Activated naive CD4-positive, alpha-beta T cell treated with anti-CD3 and anti-CD28 coated beads, Interleukin-2, amount 10 ng/mL, durations not matched to agents 7 days and 5 days (primary cell): ENCODE measurements at regions of chr2 and their contacts with region 1.

Region 1: DNA sequence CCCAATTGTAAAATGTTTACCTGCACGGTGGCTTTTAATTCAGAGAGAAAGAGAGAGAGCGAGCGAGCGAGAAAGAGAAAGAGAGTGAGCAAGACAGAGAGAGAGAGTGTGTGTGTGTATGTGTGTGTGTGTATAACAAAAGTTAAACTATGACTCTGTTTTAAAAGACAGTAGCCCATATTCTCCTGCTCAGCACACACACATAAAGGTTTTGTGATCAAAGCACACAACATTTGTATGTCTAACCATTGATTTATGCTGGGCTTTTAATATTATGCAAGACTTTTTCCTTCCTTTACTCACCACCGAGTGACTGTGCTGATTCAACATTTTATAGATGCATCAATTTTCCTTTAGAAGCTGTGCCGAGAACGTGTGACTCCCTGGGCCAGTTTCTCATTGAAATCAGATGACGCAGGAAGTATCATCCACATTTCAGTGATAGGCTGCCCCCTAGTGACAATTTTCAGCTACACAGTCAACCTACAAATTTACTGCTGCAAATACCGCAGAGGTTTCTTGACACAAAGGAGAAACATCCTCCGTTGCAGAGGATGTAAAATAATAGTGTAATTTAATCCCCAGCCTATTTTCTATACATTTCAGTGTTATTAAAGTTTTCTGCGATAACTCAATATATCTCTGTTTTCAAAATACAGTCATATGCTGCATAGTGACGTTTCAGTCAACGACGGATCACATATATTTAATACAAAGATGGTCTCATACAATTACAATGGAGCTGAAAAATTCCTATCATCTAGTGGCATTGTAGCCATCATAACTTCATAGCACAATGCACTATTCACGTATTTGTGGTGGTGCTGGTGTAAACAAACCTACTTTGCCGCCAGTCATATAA is 165.9 kb upstream of the TANK start:
- DNase-seq: peak; percentile 77
- H3K4me3 Mint-ChIP-seq: no peak overlapping the region
- H3K27ac Mint-ChIP-seq: no peak overlapping the region
- H3K4me1 Mint-ChIP-seq: peaks cover 7% of the 10 kb centered on the region
- H3K27me3 Mint-ChIP-seq: no peaks in the 10 kb centered on the region

Region 2: DNA sequence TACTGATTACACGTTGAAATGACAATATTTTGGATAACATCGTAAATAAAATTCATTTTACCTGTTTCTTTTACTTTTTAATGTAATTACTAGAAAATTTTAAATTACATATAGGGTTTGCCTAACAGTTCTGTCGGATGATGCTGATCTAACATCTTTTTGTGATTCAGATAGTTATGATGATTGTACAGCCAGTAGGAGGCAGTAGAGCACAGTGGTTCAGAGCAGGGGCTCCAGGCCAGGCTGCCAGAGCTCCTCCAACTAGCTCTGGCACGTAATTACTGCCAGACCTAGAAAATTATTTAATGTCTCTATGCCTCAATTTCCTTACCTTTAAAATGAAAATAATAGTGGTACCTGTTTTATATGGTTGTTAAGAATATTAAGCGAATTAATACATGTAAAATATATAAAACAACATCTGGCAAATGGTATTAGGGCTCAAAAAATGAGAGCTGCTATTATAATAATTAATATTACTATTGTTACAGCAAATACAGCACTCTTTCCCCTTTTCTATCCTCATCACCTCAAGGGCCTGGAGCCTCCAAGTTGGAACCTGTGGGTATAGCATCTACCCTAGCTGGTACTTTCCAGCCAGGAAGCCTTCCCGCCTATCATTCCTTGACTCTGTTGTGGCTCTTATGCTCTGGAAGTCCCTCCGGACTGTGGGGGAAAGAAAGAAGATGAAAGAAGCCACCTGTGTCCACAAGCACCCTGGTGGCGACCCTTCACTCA is 884.3 kb before region 1 on chr2:
- CTCF ChIA-PET with region 1: interaction called, 44 read pairs
- DNase-seq: peak; percentile 62
- H3K4me3 Mint-ChIP-seq: no peak overlapping the region
- H3K27ac Mint-ChIP-seq: no peak overlapping the region
- H3K4me1 Mint-ChIP-seq: no peaks in the 10 kb centered on the region
- H3K27me3 Mint-ChIP-seq: peaks cover 4% of the 10 kb centered on the region

Region 3: DNA sequence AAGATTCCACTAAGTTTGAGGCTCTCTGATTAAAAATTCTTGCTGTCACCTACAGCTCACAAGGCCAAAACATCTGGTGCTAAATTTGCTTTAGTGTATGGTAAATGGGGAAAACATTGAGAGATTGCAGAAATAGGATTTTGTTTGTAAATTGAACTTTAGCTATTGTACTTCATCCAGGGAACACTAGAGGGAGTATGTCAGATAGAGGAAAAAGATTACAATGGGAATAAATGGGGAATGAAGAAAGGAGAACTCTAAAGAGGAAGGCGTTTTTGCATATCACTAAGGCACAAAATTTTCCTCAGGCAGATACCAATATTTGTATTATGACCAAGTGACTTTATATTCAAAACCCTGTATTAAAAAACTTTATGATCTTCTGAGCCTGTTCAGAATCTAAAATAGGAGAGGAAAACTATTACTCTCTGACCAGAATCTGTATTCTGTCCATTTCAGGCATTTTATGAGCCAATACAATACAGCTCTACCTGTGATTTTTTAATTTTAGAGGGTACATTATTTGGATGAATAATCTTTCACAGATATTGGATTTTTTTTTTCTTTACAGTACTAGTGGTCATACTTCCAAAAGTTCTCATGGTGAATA is 742.0 kb before region 1 on chr2:
- CTCF ChIA-PET with region 1: interaction called, 13 read pairs
- DNase-seq: no peak
- H3K4me3 Mint-ChIP-seq: no peak overlapping the region
- H3K27ac Mint-ChIP-seq: no peak overlapping the region
- H3K4me1 Mint-ChIP-seq: no peaks in the 10 kb centered on the region
- H3K27me3 Mint-ChIP-seq: no peaks in the 10 kb centered on the region

Region 4: GRCh38 chr2:160324161-160324800 is 670.1 kb before region 1 on chr2:
- CTCF ChIA-PET with region 1: interaction called, 16 read pairs
- DNase-seq: peak; percentile 53
- H3K4me3 Mint-ChIP-seq: no peak overlapping the region
- H3K27ac Mint-ChIP-seq: no peak overlapping the region
- H3K4me1 Mint-ChIP-seq: peaks cover 77% of the 10 kb centered on the region
- H3K27me3 Mint-ChIP-seq: no peaks in the 10 kb centered on the region

Region 5: DNA sequence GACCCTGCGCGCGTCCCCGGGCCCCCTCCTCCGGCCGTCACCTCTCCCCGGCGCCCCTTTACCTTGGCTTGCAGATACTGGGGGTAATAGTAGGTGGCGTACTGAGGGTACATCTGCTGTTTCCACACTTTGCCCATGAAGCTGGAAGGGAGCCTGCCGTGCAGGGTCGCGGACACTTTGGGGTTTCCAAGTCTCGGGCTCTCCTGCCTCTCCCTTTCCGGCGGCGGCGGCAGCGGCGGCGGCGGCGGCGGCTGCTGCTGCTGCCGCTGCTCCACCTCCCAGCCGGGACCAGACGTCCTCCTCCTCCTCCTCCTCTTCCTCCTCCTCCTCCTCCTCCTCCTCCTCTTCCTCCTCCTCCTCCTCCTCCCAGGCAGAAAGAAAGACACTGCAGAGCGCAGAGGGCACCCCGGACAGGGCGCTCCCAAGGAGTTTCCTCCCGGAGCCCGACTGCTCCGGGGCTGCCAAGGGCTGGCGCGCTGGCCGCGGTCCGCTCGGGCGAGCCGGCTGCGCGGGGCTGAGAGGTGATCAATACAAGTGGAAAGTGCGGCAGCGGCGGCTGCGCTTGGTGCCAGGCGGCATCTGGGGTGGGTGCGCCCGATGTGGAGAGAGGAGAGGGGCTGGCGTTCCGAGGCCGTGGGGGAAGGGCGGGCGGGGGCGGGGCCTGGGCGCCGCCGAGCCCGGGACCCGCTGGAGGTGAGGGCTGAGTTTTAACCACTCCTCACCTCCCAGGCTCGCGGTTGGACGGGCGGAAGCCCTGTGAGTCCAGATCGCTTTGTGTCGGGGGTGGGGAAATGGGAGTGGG is 500.9 kb before region 1 on chr2 and contains the start of gene RBMS1:
- CTCF ChIA-PET with region 1: no interaction called
- DNase-seq: peak; percentile 70
- H3K4me3 Mint-ChIP-seq: peak within 1 kb of the TSS; percentile 99
- H3K27ac Mint-ChIP-seq: peak within 1 kb of the TSS; percentile 97
- H3K4me1 Mint-ChIP-seq: peaks cover 37% of the 10 kb centered on the region
- H3K27me3 Mint-ChIP-seq: peaks cover 23% of the 10 kb centered on the region

Region 6: DNA sequence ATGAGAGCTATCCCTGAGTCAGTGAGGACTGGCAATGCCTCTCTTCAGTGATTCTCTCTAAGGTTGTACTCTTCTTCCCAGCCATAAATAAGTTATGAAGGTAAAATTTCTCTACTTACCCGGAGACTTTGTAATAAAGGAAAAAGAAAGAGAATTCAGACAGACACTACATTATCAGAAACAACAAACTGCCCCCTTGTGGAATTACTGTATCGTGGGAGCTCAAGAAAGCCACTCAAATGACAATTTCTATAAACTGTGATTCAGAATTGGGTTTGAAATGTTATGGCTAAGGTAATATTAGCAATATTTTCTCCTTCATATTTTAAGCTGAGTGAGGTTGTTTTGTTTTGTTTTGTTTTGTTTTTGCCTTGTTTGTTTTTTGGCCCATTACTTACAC is 10.0 kb after region 1 on chr2:
- CTCF ChIA-PET with region 1: interaction called, 25 read pairs
- DNase-seq: no peak
- H3K4me3 Mint-ChIP-seq: no peak overlapping the region
- H3K27ac Mint-ChIP-seq: no peak overlapping the region
- H3K4me1 Mint-ChIP-seq: no peaks in the 10 kb centered on the region
- H3K27me3 Mint-ChIP-seq: peaks cover 11% of the 10 kb centered on the region